ENCODE measurements at regions of chrX and their contacts with region 1.

Region 1: GRCh38 chrX:8005678-8006347 is 78.6 kb upstream of the PNPLA4 start:
- DNase-seq: no peak
- ATAC-seq: no peak
- H3K4me3 ChIP-seq: no peak overlapping the region
- H3K27ac ChIP-seq: no peak overlapping the region
- H3K4me1 ChIP-seq: no peaks in the 10 kb centered on the region
- H3K27me3 ChIP-seq: no peaks in the 10 kb centered on the region
- CTCF ChIP-seq: no peak
- EP300 ChIP-seq: no peak
- POLR2A ChIP-seq: no peak
- RAD21 ChIP-seq: no peak

Region 2: GRCh38 chrX:8018934-8019333 is 13.1 kb after region 1 on chrX:
- CTCF ChIA-PET with region 1: interaction called, 3 read pairs
- POLR2A ChIA-PET with region 1: no interaction called
- RAD21 ChIA-PET with region 1: no interaction called
- SMC1A ChIA-PET with region 1: interaction called, 11 read pairs
- in situ Hi-C with region 1: no loop called
- intact Hi-C with region 1: no loop called
- DNase-seq: no peak
- ATAC-seq: no peak
- H3K4me3 ChIP-seq: no peak overlapping the region
- H3K27ac ChIP-seq: no peak overlapping the region
- H3K4me1 ChIP-seq: no peaks in the 10 kb centered on the region
- H3K27me3 ChIP-seq: no peaks in the 10 kb centered on the region
- CTCF ChIP-seq: no peak
- EP300 ChIP-seq: no peak
- POLR2A ChIP-seq: no peak
- RAD21 ChIP-seq: no peak

Measured in GM12878 (cell line).